Activated CD8-positive, alpha-beta memory T cell treated with anti-CD3 and anti-CD28 coated beads, Interleukin-2, amount 10 ng/mL, durations not matched to agents 7 days and 5 days (primary cell): ENCODE measurements at regions of chr3 and their contacts with region 1.

Region 1: DNA sequence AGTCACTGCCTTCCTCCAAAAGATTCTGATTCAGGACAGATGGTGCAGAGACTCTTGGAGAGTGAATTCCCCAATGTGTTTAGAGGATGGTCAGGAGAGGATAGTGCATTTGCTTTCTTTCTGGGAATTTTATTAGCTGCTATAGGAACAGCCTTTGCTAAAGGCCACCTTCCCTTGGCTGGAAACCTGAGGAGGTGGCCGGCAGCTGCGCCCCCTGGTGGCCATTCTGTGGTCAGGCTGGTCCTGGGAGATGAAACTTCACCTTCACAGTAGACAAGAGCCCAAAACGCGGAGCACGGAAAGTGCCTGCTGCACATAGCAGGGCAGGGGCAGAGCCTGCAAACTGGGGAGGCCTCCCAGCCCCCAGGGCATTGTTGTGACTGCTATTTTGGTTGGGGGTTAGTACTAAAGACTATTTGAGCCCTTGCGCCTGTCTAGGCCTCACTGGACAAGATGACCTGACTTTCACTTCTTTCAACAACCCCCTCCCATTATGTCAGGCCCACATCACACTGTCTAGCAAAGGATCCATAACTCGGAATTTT is 34.3 kb downstream of the SEC22C start:
- DNase-seq: peak; percentile 69
- ATAC-seq: peak; percentile 79
- H3K4me3 Mint-ChIP-seq: no peak overlapping the region
- H3K27ac Mint-ChIP-seq: no peak overlapping the region
- H3K4me1 Mint-ChIP-seq: peaks cover 2% of the 10 kb centered on the region
- H3K27me3 Mint-ChIP-seq: no peaks in the 10 kb centered on the region

Region 2: DNA sequence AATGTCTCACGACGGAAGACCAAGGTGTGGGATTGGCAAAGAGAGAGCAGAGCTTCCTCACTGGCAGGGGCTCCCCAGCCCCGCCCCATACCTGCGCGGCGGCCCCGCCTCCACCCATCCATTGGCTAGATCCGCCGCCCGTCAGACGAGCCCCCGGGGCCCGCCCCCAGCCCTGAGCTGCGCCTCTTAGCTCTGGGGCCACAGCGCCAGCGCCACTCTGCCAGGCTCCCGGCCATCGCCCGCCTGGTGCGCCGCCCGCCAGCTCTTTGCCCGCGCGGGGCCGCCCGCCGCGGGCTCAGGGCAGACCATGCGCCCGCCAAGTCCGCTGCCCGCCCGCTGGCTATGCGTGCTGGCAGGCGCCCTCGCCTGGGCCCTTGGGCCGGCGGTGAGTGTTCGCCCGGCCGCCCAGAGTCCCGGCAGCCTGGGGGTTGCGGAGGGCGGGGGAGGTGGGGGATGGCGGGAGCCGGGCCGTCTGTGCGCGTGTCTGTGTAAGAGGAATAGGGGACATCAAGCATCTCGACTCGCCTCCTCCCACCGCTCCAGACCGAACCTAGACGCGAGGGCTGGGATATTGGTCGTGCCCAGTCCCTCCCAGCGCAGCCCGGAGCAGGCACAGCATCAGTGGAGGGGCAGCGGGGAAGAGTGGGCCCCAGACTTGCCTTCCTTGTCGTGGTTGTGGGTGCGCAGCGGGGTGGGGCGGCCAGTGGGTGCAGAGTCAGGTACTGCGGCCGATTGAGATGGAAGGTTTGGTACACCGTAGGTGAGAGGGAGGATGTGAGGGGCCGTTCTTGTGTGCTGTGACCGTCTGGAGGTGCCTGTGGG is 44.8 kb before region 1 on chr3 and contains the start of gene VIPR1:
- CTCF ChIA-PET with region 1: interaction called, 39 read pairs
- DNase-seq: peak; percentile 87
- ATAC-seq: peak; percentile 95
- H3K4me3 Mint-ChIP-seq: peak within 1 kb of the TSS; percentile 81
- H3K27ac Mint-ChIP-seq: no peak within 1 kb of the TSS
- H3K4me1 Mint-ChIP-seq: peaks cover 33% of the 10 kb centered on the region
- H3K27me3 Mint-ChIP-seq: peaks cover 44% of the 10 kb centered on the region
- total RNA-seq, gene VIPR1: 0.14 to 1.9 TPM

Region 3: GRCh38 chr3:42557849-42558248 is 10.4 kb after region 1 on chr3:
- CTCF ChIA-PET with region 1: interaction called, 15 read pairs
- DNase-seq: peak; percentile 54
- ATAC-seq: no peak
- H3K4me3 Mint-ChIP-seq: no peak overlapping the region
- H3K27ac Mint-ChIP-seq: no peak overlapping the region
- H3K4me1 Mint-ChIP-seq: peaks cover 26% of the 10 kb centered on the region
- H3K27me3 Mint-ChIP-seq: no peaks in the 10 kb centered on the region

Region 4: GRCh38 chr3:42569593-42570142 is 22.2 kb after region 1 on chr3:
- CTCF ChIA-PET with region 1: no interaction called
- DNase-seq: no peak
- ATAC-seq: no peak
- H3K4me3 Mint-ChIP-seq: no peak overlapping the region
- H3K27ac Mint-ChIP-seq: no peak overlapping the region
- H3K4me1 Mint-ChIP-seq: peaks cover 2% of the 10 kb centered on the region
- H3K27me3 Mint-ChIP-seq: no peaks in the 10 kb centered on the region